Left cardiac atrium (tissue), 4 donors: ENCODE measurements at regions of chr21 and their contacts with region 1.

Region 1: GRCh38 chr21:40120940-40121575 is 253.8 kb downstream of the PCP4 start:
- DNase-seq: no peak
- ATAC-seq: no peak

Region 2: GRCh38 chr21:39518138-39518846 is 602.8 kb before region 1 on chr21:
- intact Hi-C with region 1: loop called in 1 of 2 experiments (anchors 5 kb)
- DNase-seq: peak; percentile 47
- ATAC-seq: peak; percentile 71 to 82

Region 3: DNA sequence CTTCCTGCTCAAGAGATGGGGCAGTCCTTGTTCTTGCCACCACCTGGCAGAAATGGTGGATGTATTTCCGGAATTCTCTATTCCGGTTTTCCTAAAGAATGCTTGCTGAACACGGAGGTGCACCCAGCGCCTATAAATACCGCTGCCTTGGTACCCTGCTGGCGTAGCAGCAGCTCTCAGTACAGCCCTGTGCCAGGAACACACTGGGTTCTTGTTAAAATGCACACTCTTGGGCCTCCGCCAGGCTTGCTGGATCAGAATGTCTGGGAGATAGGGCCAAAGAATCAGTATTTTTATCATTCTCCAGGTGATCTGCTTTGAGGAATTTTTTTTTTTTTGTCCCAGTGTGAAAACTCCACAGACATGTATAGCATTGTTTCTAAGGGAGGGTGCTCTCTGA is 321.9 kb before region 1 on chr21:
- intact Hi-C with region 1: loop called in 1 of 2 experiments (anchors 10 kb)
- DNase-seq: peak; percentile 62
- ATAC-seq: peak; percentile 64 to 75

Region 4: GRCh38 chr21:39867198-39867650 is 253.8 kb before region 1 on chr21 and contains the start of gene PCP4:
- intact Hi-C with region 1: loop called in 1 of 2 experiments (anchors 5 kb)
- DNase-seq: peak; percentile 52
- ATAC-seq: peak; percentile 50 to 75
- total RNA-seq, gene PCP4: 6.4 to 6.8 TPM

Region 5: DNA sequence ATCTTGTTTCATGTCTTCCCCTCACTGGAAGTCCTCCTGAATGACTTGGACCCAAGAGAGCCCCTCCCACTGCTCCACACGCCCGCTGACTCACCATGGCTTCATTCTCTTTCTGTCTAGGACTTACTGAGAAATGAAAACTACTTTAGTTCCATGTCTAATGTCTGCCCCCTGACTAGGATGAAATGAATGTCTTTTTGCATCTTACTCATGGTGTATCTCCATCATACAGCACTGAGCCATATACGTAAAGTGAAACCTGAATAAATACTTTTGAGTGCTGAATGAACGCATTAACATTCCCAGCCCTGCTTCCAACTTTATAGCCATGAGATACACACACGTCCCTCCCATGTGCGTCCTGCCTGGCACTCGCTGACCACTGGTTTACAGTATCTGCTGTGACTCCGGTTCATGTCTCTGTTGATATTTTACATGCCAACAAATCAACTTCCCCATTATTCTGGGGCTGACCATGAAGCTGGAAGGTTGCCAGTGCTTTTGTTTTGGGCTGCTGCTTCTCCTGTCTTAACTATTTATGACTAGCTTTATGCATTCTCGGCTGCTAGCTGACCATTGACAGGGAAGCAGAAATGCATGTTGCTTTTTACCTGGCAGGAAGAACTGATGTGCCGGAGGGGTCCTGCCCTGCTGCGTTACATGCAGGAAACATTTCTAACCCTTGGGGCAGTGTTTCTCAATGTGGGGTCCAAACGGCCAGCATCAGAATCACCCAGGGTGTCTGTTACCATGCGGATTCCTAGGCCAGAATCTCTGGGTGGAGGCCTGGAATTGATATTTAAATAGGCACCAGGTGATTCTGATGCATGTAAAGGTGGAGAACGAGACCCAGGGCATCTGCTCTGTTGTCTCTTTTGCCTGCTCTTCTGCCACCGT is 71.4 kb before region 1 on chr21:
- intact Hi-C with region 1: loop called in 1 of 2 experiments (anchors 5 kb)
- DNase-seq: no peak
- ATAC-seq: peak in 1 of 2 donors; percentile 40